Posterior vena cava (tissue), 2 donors: ENCODE measurements at regions of chr11 and their contacts with region 1.

Region 1: GRCh38 chr11:131875611-131876010 is 505.2 kb downstream of the NTM start:
- DNase-seq: peak; percentile 86

Region 2: DNA sequence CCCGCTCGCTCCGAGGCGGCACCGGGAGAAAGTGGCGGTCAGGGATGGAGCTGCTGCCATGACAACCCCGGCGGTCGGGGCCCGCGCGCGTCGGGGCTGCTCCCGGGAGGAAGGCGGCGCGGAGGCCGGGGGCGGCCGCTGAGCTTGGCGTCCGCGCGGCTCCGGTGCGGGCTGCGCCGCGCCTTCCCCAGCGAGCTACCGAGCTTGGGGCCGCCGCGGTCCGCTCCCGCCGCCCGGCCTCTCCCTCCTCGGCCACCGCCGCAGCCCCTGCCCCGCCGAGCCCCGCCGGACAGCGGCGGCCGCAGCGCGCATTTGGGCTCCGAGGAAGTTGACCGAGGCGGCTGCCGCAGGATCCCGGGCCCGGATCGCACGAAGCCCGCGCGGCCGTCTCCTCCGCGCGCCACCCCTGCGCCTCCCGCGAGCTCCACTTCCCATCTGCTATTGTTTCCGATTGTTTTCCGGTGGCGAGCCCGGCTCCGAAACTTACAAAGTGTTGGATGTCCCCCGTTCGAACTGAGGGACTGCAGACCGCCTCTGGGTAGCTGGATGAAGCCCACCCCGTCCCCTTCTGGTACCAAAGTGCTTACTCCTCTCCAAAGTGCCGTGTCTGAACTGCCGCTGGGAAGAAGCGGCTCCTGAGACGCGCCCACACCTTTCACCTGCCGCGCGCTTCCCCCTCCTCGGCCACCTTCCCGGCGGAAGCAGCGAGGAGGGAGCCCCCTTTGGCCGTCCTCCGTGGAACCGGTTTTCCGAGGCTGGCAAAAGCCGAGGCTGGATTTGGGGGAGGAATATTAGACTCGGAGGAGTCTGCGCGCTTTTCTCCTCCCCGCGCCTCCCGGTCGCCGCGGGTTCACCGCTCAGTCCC is 35.1 kb after region 1 on chr11:
- intact Hi-C with region 1: loop called in 1 of 2 experiments (anchors 2 kb)
- DNase-seq: no peak